ENCODE measurements at regions of chr1 and their contacts with region 1.

Region 1: DNA sequence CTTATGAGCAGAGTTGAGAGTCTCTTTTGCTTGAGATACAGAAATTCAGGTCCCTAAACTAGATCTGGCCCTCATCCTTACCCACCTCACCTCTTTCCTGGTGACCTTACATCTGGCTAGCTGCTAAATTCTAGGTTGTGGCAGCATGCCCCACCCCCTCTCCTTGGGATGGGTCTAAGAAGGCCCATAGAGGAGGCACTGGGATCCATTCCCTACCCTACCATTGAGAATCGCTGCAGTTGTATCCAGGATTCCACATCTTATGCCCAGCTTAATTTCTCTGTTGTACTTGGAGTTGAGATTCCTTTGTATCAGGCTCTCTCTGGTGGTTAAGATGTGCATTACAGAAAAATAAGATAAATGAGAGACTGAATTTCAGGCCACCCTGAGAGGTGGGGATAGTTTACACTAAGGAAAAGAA is 9.5 kb upstream of the TMEM39B start:
- DNase-seq: peak; percentile 78
- H3K4me3 ChIP-seq: no peak overlapping the region
- H3K27ac ChIP-seq: peak overlapping the region; percentile 35
- H3K4me1 ChIP-seq: peaks cover 22% of the 10 kb centered on the region
- H3K27me3 ChIP-seq: no peaks in the 10 kb centered on the region
- CTCF ChIP-seq: peak; percentile 34
- POLR2A ChIP-seq: no peak

Region 2: DNA sequence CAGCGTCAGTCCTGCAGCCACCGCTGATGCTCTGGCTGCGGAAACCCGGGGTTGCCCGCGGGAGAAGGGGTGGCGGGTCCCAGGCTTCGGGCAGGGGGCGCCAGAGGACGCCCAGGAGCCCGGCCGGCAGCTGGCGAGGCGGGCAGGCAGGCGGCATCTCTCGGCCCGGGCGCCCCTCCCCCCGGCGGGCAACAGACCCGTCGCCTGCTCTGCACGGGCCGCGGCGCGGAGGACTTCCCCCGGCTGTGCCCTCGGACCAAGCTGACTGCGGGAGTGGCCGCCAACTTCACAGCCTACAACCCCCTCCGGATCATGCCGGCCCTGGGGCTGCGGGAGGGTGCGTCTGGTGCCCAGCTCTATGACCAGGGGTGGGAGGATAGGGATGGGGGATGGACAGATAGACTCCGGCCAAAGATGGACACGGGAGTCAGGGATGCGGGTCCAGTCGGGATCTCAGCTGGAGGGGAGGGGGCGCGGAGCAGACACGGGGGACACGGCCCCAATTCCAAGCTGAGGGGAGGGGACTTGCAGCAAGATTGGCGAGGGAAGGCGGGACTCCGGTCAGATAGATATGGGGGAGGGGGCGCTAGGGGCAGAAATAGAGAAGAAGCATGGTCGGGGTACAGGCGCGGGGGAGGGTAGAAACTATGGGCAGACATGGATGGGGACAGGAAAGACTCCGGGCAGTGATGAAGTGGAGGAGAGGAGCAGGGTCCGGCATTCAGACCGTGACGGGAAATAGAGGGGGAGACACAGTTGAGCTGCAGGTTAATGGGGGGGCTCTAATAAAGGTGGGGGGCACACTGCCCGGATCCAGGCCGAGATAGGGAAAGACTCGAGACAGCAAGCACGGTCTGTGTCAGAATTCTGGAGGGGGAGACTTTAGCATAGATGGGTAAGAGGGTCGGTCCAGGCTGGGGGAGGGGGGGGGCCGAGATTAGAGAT is 300.3 kb before region 1 on chr1:
- CTCF ChIA-PET with region 1: interaction called, 12 read pairs
- POLR2A ChIA-PET with region 1: no interaction called
- dilution Hi-C with region 1: no loop called
- intact Hi-C with region 1: no loop called
- DNase-seq: peak; percentile 63
- H3K4me3 ChIP-seq: peak overlapping the region; percentile 40 to 42 (median 42)
- H3K27ac ChIP-seq: no peak overlapping the region
- H3K4me1 ChIP-seq: peaks cover 26% of the 10 kb centered on the region
- H3K27me3 ChIP-seq: peaks cover 3 to 4% of the 10 kb centered on the region in 2 experiments
- CTCF ChIP-seq: peak; percentile 55 to 78
- POLR2A ChIP-seq: no peak

Region 3: DNA sequence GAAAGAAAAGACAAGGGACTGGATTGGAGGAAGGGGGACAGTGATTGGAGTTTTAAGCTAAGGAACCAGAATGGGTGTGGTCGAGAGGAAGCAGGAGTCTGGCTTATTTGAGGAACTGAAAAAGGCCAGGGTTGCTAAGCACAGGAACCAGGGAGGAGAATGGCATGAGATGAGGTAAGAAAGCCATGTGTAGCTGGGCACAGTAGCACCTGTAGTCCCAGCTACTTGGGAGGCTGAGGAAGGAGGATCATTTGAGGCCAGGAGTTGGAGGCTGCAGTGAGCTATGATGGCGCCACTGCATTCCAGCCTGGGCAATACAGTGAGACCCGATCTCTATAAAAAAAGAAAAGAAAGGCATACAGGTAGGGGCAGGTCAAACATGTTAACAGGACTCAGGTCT is 57.7 kb before region 1 on chr1:
- CTCF ChIA-PET with region 1: interaction called, 10 read pairs
- POLR2A ChIA-PET with region 1: no interaction called
- dilution Hi-C with region 1: no loop called
- intact Hi-C with region 1: no loop called
- DNase-seq: no peak
- H3K4me3 ChIP-seq: no peak overlapping the region
- H3K27ac ChIP-seq: no peak overlapping the region
- H3K4me1 ChIP-seq: peaks cover 14% of the 10 kb centered on the region
- H3K27me3 ChIP-seq: no peaks in the 10 kb centered on the region
- CTCF ChIP-seq: no peak
- POLR2A ChIP-seq: no peak

Region 4: GRCh38 chr1:32044234-32044633 is 19.0 kb before region 1 on chr1:
- CTCF ChIA-PET with region 1: interaction called, 17 read pairs
- POLR2A ChIA-PET with region 1: no interaction called
- dilution Hi-C with region 1: no loop called
- intact Hi-C with region 1: no loop called
- DNase-seq: no peak
- H3K4me3 ChIP-seq: no peak overlapping the region
- H3K27ac ChIP-seq: no peak overlapping the region
- H3K4me1 ChIP-seq: no peaks in the 10 kb centered on the region
- H3K27me3 ChIP-seq: no peaks in the 10 kb centered on the region
- CTCF ChIP-seq: no peak
- POLR2A ChIP-seq: no peak

Region 5: DNA sequence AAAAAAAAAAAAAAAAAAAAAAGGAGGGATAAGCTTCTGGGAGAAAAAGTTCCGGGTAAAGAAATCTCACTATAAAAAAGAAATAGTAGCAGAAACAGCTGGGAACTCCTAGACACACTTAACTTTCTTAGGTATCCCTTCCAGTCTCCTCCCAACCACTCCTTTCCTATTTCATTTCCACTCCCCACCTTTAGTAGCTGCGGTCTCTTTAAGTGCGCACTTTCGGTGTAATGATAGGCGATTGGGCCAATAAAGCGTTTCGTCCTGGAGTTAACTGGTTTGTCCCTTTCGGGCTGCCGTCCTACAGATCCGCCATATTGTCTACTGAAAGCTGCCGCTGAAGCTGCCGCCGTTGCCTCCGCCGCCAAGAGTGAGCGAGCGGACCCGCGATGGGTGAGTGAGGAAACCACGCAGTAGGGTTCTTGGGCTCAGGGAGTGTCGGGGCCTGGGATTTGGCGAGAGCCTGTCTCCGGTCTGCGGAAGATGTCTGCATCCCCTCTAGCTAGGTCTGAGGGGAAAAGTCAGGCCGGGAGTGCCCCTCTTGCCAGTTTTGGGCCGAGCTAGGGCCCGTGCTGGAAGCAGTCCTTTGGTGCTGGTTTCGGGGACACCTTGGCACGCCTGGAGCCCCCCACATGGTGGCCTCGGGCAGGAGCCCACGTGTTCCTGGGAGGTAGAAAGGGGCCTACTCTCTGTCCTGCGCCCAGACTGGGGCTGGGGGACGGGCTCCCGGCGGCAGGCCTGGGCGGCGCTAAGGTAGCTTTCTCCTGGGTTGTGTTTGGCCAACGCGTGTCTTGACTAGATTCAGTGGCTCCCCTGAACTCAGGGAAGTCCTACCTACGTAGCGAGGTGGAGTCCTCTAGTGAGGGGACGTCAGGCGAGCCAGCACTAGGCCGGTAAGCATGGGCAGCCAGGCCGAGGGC is 44.7 kb after region 1 on chr1 and contains the start of gene KPNA6:
- CTCF ChIA-PET with region 1: interaction called, 22 read pairs
- POLR2A ChIA-PET with region 1: no interaction called
- dilution Hi-C with region 1: no loop called
- intact Hi-C with region 1: no loop called
- DNase-seq: peak; percentile 97
- H3K4me3 ChIP-seq: peak within 1 kb of the TSS; percentile 72 to 86 (median 81)
- H3K27ac ChIP-seq: peak within 1 kb of the TSS; percentile 66
- H3K4me1 ChIP-seq: peaks cover 4% of the 10 kb centered on the region
- H3K27me3 ChIP-seq: no peaks in the 10 kb centered on the region
- CTCF ChIP-seq: no peak
- POLR2A ChIP-seq: peak; percentile 52
- total RNA-seq, gene KPNA6: 83.4 and 85.6 TPM in 2 replicates

Region 6: GRCh38 chr1:32275424-32275823 is 212.2 kb after region 1 on chr1:
- CTCF ChIA-PET with region 1: no interaction called
- POLR2A ChIA-PET with region 1: no interaction called
- dilution Hi-C with region 1: no loop called
- intact Hi-C with region 1: no loop called
- DNase-seq: no peak
- H3K4me3 ChIP-seq: no peak overlapping the region
- H3K27ac ChIP-seq: no peak overlapping the region
- H3K4me1 ChIP-seq: peaks cover 8% of the 10 kb centered on the region
- H3K27me3 ChIP-seq: peaks cover 16 to 24% of the 10 kb centered on the region in 2 experiments
- CTCF ChIP-seq: no peak
- POLR2A ChIP-seq: no peak

Measured in endothelial cell of umbilical vein (primary cell).